ENCODE measurements at regions of chr9 and their contacts with region 1.

Region 1: GRCh38 chr9:110650991-110651411 is 17.6 kb upstream of the MUSK start:
- DNase-seq: peak in 8 of 42 donors; percentile 20 to 66 (median 32)

Region 2: GRCh38 chr9:110767559-110768063 is 116.6 kb after region 1 on chr9:
- intact Hi-C with region 1: loop called (anchors 5 kb)
- DNase-seq: peak in 38 of 42 donors; percentile 10 to 80 (median 46)

Measured in head of caudate nucleus (tissue), 42 donors.